OCI-LY7 (cell line): ENCODE measurements at regions of chr19 and their contacts with region 1.

Region 1: DNA sequence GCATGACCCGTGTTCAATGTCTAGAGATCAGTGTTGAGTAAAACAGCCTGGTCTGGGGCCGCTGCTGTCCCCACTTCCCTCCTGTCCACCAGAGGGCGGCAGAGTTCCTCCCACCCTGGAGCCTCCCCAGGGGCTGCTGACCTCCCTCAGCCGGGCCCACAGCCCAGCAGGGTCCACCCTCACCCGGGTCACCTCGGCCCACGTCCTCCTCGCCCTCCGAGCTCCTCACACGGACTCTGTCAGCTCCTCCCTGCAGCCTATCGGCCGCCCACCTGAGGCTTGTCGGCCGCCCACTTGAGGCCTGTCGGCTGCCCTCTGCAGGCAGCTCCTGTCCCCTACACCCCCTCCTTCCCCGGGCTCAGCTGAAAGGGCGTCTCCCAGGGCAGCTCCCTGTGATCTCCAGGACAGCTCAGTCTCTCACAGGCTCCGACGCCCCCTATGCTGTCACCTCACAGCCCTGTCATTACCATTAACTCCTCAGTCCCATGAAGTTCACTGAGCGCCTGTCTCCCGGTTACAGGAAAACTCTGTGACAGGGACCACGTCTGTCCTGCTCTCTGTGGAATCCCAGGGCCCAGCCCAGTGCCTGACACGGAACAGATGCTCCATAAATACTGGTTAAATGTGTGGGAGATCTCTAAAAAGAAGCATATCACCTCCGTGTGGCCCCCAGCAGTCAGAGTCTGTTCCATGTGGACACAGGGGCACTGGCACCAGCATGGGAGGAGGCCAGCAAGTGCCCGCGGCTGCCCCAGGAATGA is 1.5 kb upstream of the CEACAM5 start:
- DNase-seq: peak; percentile 76
- H3K4me3 ChIP-seq: peak overlapping the region; percentile 45
- H3K27ac ChIP-seq: no peak overlapping the region
- H3K4me1 ChIP-seq: no peaks in the 10 kb centered on the region
- CTCF ChIP-seq: peak; percentile 100

Region 2: GRCh38 chr19:41746593-41747227 is 39.8 kb after region 1 on chr19:
- CTCF ChIA-PET with region 1: interaction called, 3 read pairs
- POLR2A ChIA-PET with region 1: no interaction called
- intact Hi-C with region 1: loop called (anchors 1 kb)
- DNase-seq: peak; percentile 72
- H3K4me3 ChIP-seq: no peak overlapping the region
- H3K27ac ChIP-seq: no peak overlapping the region
- H3K4me1 ChIP-seq: peaks cover 13% of the 10 kb centered on the region
- CTCF ChIP-seq: peak; percentile 88